Posterior vena cava (tissue), 2 donors: ENCODE measurements at regions of chr6 and their contacts with region 1.

Region 1: DNA sequence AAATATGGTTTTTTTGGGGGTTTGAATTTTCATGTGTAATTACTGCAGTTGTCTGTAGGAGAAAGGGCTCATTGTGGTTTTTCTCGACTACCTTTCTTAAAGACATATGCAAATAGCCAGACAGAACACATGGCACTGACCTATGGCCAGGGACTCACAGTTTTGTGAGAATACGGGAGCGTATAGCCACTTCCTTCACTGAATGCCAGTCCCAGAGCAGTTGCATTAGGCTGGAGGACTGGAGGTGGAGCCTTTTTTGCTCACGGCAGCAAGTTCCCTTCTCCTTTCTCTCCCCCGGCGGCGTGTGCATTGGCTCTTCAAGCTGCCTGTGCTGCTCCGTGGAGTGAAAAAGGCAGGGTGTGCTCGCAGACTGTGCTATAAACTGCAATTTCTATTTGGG is 114.9 kb downstream of the AKAP7 start:
- DNase-seq: no peak

Region 2: GRCh38 chr6:131231103-131231502 is 19.0 kb before region 1 on chr6:
- intact Hi-C with region 1: no loop called
- DNase-seq: no peak

Region 3: GRCh38 chr6:131480269-131480668 is 230.1 kb after region 1 on chr6:
- intact Hi-C with region 1: loop called in 1 of 2 experiments (anchors 5 kb)
- DNase-seq: no peak

Region 4: GRCh38 chr6:131597446-131597845 is 347.3 kb after region 1 on chr6:
- intact Hi-C with region 1: no loop called
- DNase-seq: no peak